SK-N-SH (cell line): ENCODE measurements at regions of chr12 and their contacts with region 1.

Region 1: GRCh38 chr12:42023733-42024494 is 120.8 kb downstream of the GXYLT1 start:
- DNase-seq: peak; percentile 71
- H3K4me3 ChIP-seq: peak overlapping the region; percentile 13 to 35; a peak in 2 of 4 replicates
- H3K27ac ChIP-seq: no peak overlapping the region
- H3K4me1 ChIP-seq: peaks cover 0 to 2% of the 10 kb centered on the region in 2 experiments; a peak in 1 of 4 replicates
- H3K27me3 ChIP-seq: no peaks in the 10 kb centered on the region
- CTCF ChIP-seq: peak; percentile 95
- EP300 ChIP-seq: no peak
- RAD21 ChIP-seq: peak; percentile 91

Region 2: GRCh38 chr12:41190338-41190737 is 833.6 kb before region 1 on chr12:
- CTCF ChIA-PET with region 1: interaction called, 25 read pairs
- POLR2A ChIA-PET with region 1: no interaction called
- DNase-seq: peak; percentile 57
- H3K4me3 ChIP-seq: no peak overlapping the region
- H3K27ac ChIP-seq: no peak overlapping the region
- H3K4me1 ChIP-seq: peaks cover 0 to 12% of the 10 kb centered on the region in 2 experiments; a peak in 2 of 4 replicates
- H3K27me3 ChIP-seq: peaks cover 27% of the 10 kb centered on the region; the same call in 1 of the 2 replicates
- CTCF ChIP-seq: peak; percentile 43
- EP300 ChIP-seq: no peak
- RAD21 ChIP-seq: peak; percentile 79

Region 3: DNA sequence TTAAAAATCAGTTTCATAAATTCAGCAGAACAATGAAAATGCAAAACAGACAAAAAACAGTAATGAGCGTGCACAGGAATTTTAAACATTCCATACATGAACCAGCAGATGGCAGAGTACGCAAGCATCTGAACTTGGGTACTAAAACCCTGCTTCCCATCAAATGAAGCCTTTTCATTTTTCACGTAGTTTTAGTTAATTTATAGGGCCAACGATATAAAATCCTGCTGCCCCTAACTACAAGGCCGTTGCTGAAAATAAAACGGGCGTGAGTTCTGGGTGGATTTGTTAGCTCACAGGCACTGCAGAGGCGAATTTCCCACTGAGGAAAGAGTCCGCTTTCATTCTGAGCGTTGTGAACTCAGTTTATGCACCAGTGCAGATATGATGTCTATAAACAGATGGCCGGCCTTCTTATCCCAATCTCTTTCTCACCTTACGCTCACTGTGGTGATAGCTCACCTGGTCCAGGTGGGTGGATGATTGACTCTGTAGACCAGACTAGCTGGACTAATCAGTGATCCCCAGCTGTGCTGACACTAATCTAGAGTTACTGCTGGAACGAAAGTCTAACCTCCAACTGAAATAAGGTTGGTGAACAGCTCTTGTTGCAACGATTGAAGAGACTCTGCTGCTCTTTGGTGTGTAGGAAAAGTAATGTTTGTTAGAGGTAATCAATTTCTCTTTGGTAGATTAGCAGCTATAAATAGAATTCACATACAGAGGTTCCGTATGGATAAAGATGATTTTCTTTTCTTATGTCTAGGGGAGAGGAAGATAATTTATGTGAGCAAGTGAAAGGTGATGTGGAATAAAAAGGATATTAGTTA is 746.6 kb before region 1 on chr12:
- CTCF ChIA-PET with region 1: interaction called, 140 read pairs
- POLR2A ChIA-PET with region 1: no interaction called
- DNase-seq: peak; percentile 34
- H3K4me3 ChIP-seq: no peak overlapping the region; a peak in 1 of 4 replicates
- H3K27ac ChIP-seq: no peak overlapping the region
- H3K4me1 ChIP-seq: peaks cover 0 to 4% of the 10 kb centered on the region in 2 experiments; a peak in 2 of 4 replicates
- H3K27me3 ChIP-seq: no peaks in the 10 kb centered on the region
- CTCF ChIP-seq: peak; percentile 75
- EP300 ChIP-seq: no peak
- RAD21 ChIP-seq: peak; percentile 95

Region 4: GRCh38 chr12:41663598-41664258 is 360.2 kb before region 1 on chr12:
- CTCF ChIA-PET with region 1: interaction called, 13 read pairs
- POLR2A ChIA-PET with region 1: no interaction called
- DNase-seq: peak; percentile 49
- H3K4me3 ChIP-seq: no peak overlapping the region
- H3K27ac ChIP-seq: no peak overlapping the region
- H3K4me1 ChIP-seq: no peaks in the 10 kb centered on the region
- H3K27me3 ChIP-seq: no peaks in the 10 kb centered on the region
- CTCF ChIP-seq: peak; percentile 65
- EP300 ChIP-seq: no peak
- RAD21 ChIP-seq: peak; percentile 73